H1 (cell line): ENCODE measurements at regions of chr1 and their contacts with region 1.

Region 1: DNA sequence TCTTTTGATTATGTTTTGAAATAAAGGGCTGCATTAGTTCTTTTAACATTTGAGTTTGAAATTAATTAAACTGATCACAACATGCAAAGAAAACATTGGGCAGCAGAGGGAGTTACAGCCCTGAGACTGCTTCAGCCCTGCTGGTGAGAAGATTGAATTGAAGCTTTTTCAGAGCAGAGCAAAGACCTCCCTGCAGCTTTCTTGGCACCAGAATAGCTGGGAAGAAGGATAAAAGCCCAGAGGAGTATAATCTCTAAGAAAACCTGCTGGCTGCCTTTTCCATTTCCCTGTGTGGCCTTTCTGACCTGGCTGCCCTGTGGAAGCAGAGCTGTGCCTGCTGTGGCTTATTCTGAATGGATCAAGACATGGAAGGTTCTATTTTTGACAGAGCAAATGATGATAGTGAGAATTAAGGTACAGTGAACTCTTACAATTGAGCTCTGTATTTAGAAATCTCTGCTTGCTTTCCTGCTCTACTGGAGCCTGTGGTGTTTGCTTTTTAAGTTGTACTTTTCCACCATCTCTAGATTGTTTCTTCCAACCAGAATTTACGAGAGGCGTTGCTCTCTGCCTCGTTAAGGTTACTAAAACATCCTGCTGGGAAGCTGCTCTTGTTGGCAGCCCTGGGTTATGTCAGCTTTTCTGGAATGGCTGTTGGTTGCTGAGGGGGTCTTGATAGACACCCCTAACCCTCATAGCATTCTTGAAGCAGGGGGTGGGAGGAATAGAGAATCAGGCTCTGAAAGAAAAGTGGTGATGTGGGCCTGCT is 9.9 kb downstream of the SNRPE start:
- DNase-seq: peak in 1 of 2 experiments; percentile 19
- H3K4me3 ChIP-seq: no peak overlapping the region
- H3K27ac ChIP-seq: no peak overlapping the region
- H3K4me1 ChIP-seq: peaks cover 0 to 5% (median 0%) of the 10 kb centered on the region in 4 experiments; a peak in 1 of 7 replicates
- H3K27me3 ChIP-seq: no peaks in the 10 kb centered on the region
- CTCF ChIP-seq: peak; percentile 20 to 100 (median 91)
- EP300 ChIP-seq: no peak
- POLR2A ChIP-seq: no peak
- RAD21 ChIP-seq: peak; percentile 98

Region 2: DNA sequence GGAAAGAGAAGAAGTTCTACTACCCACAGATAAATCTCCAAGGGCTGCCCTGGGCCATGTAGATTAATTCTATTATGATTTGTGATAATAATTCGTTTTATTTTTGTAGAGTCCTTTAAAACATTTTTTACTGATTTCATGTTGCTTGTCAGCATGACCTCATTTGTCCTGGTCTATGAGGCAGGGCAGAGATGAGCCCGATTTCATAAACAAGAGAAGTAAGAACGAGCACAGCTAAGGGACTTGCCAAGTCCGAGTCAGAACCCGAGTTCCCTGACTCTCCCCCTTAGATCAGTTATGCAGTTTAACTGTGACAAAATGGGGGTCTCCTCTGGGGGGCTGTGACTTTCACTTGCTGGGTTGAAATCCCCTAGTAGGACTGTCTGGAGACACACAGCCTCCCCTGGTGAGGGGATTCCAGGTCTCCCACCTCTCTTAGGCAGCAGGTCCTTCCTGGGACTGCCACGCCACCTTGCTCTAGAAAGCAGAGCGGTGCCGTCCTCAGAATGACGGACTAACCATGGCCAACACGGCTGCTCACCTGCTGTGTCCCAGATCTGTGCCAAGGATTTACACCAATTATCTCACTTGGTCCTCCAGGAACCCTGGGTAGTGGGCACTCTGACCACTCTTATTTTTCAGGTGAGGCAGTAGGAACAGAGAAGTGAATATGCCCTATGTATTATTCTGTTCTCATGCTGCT is 170.7 kb after region 1 on chr1:
- CTCF ChIA-PET with region 1: interaction called, 13 read pairs
- POLR2A ChIA-PET with region 1: interaction called, 3 read pairs
- DNase-seq: no peak
- H3K4me3 ChIP-seq: no peak overlapping the region
- H3K27ac ChIP-seq: no peak overlapping the region
- H3K4me1 ChIP-seq: peaks cover 0 to 7% (median 5%) of the 10 kb centered on the region in 4 experiments; a peak in 6 of 7 replicates
- H3K27me3 ChIP-seq: no peaks in the 10 kb centered on the region
- CTCF ChIP-seq: no peak
- EP300 ChIP-seq: no peak
- POLR2A ChIP-seq: no peak
- RAD21 ChIP-seq: no peak

Region 3: DNA sequence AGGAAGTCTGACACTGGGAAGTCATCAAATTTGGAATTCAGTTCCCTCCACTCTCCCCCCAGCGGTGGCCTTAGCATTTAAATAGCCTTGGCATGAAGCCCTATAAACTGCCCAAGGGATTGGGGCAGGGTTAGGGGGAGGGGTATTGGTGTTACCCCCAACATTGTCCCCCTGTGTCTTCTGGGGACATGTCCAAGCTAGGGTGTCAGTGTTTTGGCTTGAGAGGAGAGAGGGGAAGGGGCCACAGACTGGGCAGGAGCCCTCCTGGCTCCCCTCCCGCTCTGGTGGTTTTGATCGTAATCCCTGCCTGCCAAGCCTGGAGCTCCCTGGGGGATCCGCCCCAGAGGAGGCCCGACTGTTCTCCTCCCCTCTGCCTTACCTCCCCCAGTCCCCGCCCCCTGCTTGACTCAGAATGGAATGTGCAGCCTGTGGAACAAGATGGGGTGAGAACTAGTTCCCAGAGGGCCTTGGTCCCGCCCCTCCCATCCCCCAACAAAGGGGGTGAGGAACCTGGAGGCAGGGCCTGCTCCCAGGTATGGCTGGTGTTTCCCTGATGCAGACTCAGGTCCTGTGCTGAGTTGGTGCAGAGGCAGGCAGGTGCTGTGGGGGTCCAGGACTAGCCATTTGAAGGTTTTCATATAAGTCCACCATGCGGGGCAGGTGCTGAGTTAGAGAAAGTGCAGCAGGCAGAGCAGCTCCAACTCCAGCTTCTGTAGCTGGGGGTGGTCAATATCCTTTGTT is 209.0 kb after region 1 on chr1:
- CTCF ChIA-PET with region 1: interaction called, 40 read pairs
- POLR2A ChIA-PET with region 1: interaction called, 11 read pairs
- DNase-seq: peak; percentile 97
- H3K4me3 ChIP-seq: peak overlapping the region in 3 of 4 experiments; percentile 18 to 49 (median 36); a peak in 5 of 8 replicates
- H3K27ac ChIP-seq: peak overlapping the region; percentile 87
- H3K4me1 ChIP-seq: peaks cover 40 to 79% (median 69%) of the 10 kb centered on the region in 4 experiments
- H3K27me3 ChIP-seq: no peaks in the 10 kb centered on the region
- CTCF ChIP-seq: no peak
- EP300 ChIP-seq: peak in 1 of 2 experiments; percentile 82; a peak in 1 of 3 replicates
- POLR2A ChIP-seq: peak; percentile 66 to 83
- RAD21 ChIP-seq: no peak; a peak in 2 of 4 replicates

Region 4: DNA sequence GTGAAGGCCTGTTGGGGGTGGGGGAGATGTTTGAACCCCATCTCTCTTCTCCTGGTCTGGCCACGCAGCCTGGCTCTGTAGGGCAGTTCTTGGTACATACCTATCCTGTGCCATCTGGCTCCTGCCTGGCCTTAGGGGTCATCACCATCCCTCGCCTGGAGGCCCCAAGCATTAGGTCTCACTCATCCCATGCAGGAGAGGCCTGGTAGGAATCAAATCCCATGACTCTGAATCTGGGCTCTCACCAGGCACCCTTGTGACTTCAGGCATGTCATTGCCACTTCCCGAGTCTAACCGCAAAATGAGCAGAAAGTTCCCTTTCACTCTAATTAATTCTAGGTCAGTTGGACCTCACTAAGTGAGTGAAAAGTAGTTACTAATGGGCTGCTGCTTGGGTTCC is 243.3 kb after region 1 on chr1:
- CTCF ChIA-PET with region 1: interaction called, 46 read pairs
- POLR2A ChIA-PET with region 1: interaction called, 174 read pairs
- DNase-seq: no peak
- H3K4me3 ChIP-seq: no peak overlapping the region
- H3K27ac ChIP-seq: no peak overlapping the region
- H3K4me1 ChIP-seq: peaks cover 0 to 18% (median 13%) of the 10 kb centered on the region in 4 experiments; a peak in 6 of 7 replicates
- H3K27me3 ChIP-seq: no peaks in the 10 kb centered on the region; a peak in 1 of 7 replicates
- CTCF ChIP-seq: no peak
- EP300 ChIP-seq: no peak
- POLR2A ChIP-seq: no peak
- RAD21 ChIP-seq: no peak

Region 5: GRCh38 chr1:204136814-204137213 is 265.5 kb after region 1 on chr1:
- CTCF ChIA-PET with region 1: interaction called, 261 read pairs
- POLR2A ChIA-PET with region 1: interaction called, 174 read pairs
- DNase-seq: no peak
- H3K4me3 ChIP-seq: no peak overlapping the region
- H3K27ac ChIP-seq: no peak overlapping the region
- H3K4me1 ChIP-seq: peaks cover 0 to 2% (median under 1%) of the 10 kb centered on the region in 4 experiments; a peak in 2 of 7 replicates
- H3K27me3 ChIP-seq: no peaks in the 10 kb centered on the region; a peak in 1 of 7 replicates
- CTCF ChIP-seq: no peak
- EP300 ChIP-seq: no peak
- POLR2A ChIP-seq: peak; percentile 35 to 37; a peak in 1 of 3 replicates
- RAD21 ChIP-seq: peak; percentile 7 to 40; a peak in 3 of 4 replicates